AG04449 (cell line): ENCODE measurements at regions of chr14 and their contacts with region 1.

Region 1: DNA sequence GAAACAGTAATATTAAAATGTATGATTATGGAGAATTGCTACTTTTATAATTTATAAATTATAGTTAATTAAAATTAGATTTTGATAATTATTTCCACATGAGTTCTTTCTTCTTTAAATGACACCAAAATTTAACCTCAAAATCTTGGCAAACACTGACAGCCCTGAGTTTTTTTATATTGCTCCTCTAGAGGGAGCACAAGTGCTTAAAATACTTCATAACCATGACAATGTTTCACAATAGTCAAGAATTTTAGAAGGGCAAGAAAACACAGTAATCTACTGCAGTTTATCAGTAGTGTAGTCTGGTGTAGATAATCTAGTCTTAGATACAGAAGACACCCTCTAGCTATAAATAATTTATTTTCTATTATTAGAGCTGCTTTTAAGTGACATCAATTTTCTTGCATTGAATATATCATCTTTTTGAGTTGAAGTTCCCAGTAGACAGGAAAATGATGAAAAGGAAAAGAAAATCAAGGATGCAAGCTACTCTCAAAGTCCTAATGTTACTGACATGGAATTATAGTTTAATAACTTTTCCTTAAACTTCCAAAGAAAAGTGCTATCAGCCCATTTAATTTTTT is 14.3 kb upstream of the PTGER2 start:
- DNase-seq: no peak
- H3K4me3 ChIP-seq: no peak overlapping the region
- CTCF ChIP-seq: peak; percentile 41

Region 2: DNA sequence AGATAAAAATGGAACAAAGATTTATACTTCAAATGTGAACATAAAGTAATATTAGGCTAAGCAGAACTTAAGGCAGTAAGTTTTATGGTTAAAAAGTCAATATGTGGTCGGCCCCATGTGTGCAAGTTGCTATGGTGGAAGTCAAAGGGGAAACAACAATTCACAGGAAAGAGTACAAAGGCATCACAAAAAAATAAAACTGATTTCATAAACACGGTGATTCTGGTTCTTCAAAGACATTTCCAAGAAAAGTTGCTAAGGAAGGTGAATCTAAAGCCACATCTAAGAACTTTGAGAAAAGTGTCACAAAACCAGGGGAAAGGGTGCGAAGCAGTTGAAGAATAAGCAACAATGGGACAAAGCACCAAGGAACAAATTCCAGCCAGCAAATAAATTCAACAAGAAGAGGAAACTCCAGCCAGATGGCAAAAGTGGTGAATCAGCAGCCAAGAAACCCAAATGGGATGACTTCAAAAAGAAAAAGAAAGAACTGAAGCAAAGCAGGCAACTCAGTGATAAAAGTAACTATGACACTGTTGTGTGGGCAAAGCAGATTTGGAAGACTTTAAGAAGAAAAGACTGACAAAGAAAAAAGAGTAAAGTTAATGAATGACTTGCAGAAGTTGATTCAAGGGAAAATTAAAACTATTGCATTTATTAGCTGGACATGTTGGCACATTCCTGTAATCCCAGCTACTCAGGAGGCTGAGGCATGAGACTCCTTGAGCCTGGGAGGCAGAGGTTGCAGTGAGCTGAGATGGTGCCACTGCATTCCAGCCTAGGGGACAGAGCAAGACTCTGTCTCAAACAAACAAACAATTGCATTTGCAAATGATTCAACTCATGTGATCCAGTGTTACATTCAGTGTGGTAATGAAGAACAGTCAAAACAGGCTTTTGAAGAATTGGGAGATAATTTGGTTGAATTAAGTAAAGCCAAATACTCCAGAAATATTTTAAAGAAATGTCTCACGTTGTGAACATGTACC is 12.8 kb before region 1 on chr14:
- CTCF ChIA-PET with region 1: interaction called, 14 read pairs
- POLR2A ChIA-PET with region 1: no interaction called
- DNase-seq: no peak
- H3K4me3 ChIP-seq: no peak overlapping the region
- CTCF ChIP-seq: no peak

Region 3: GRCh38 chr14:52313903-52314594 is 14.3 kb after region 1 on chr14 and contains the start of gene PTGER2:
- CTCF ChIA-PET with region 1: interaction called, 44 read pairs
- POLR2A ChIA-PET with region 1: no interaction called
- DNase-seq: peak; percentile 42
- H3K4me3 ChIP-seq: peak within 1 kb of the TSS; percentile 77
- CTCF ChIP-seq: no peak

Region 4: DNA sequence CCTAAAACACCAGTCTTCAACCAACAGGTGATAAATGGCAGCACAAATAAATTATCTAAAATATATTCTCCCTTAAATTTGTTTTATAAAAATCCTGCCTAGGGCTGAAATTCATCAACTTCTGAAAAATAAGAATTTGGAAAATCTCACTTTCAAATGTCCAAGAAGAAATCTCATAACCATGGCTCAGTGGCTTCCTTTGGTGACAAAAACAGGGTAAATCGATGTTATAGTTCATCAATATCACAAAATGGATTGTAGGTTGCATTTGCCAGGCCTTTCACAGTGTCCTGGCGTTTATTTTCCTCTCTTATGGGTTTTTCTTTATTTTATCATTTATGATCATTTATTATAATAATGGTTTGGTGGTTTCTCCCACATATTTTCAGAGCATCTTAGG is 117.4 kb after region 1 on chr14:
- CTCF ChIA-PET with region 1: interaction called, 13 read pairs
- POLR2A ChIA-PET with region 1: no interaction called
- DNase-seq: no peak
- H3K4me3 ChIP-seq: no peak overlapping the region
- CTCF ChIP-seq: no peak

Region 5: DNA sequence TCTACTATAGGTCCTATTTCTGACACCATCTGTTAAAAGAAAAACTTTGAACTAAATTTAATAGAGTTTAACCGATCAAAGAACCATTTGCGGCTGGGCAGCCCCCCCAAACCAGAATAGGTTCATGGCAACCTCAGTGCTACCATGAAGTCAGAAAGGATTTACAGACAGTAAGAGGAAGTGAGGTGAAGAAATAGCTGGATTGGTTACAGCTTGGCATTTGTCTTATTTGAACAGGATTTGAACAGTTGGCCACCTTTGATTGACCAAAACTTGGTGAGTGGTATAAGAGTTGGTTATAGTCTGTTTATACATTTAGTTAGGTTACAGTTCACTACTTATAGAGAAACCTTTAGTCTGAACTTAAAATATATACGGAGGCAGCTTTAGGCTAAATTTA is 163.6 kb after region 1 on chr14:
- CTCF ChIA-PET with region 1: interaction called, 62 read pairs
- POLR2A ChIA-PET with region 1: no interaction called
- DNase-seq: no peak
- H3K4me3 ChIP-seq: no peak overlapping the region
- CTCF ChIP-seq: no peak

Region 6: GRCh38 chr14:52473557-52473956 is 173.8 kb after region 1 on chr14:
- CTCF ChIA-PET with region 1: interaction called, 62 read pairs
- POLR2A ChIA-PET with region 1: no interaction called
- DNase-seq: no peak
- H3K4me3 ChIP-seq: no peak overlapping the region
- CTCF ChIP-seq: peak; percentile 5